Right cardiac atrium (tissue), 5 donors: ENCODE measurements at regions of chr9 and their contacts with region 1.

Region 1: GRCh38 chr9:83979812-83980394 is at the start of gene HNRNPK:
- DNase-seq: peak; percentile 99 to 100 (median 100)
- ATAC-seq: peak; percentile 95
- H3K4me3 ChIP-seq: peak within 1 kb of the TSS; percentile 73
- H3K27ac ChIP-seq: peak within 1 kb of the TSS; percentile 96
- H3K4me1 ChIP-seq: no peaks in the 10 kb centered on the region
- H3K27me3 ChIP-seq: no peaks in the 10 kb centered on the region
- total RNA-seq, gene HNRNPK: 304 to 327 (median 310) TPM

Region 2: DNA sequence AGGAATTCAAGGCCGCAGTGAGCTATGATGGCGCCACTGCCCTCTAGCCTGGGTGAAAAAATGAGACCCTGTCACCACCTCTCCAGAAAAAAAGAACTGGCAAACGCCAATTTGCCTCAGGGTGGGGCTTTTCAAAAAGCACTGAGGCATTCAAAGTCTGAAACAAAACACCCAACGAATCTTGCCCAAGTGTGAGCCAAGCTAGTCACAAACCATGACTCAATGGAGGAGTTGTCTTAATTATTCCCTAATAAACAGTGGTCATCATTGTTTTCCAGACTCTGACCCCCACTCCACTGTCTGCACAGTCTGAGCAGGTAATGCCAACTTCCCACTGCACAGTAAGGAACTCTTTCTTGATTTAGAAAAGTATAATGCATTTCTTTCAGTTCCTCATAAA is 458.5 kb before region 1 on chr9:
- intact Hi-C with region 1: no loop called
- DNase-seq: no peak
- ATAC-seq: no peak
- H3K4me3 ChIP-seq: no peak overlapping the region
- H3K27ac ChIP-seq: no peak overlapping the region
- H3K4me1 ChIP-seq: no peaks in the 10 kb centered on the region
- H3K27me3 ChIP-seq: no peaks in the 10 kb centered on the region

Region 3: DNA sequence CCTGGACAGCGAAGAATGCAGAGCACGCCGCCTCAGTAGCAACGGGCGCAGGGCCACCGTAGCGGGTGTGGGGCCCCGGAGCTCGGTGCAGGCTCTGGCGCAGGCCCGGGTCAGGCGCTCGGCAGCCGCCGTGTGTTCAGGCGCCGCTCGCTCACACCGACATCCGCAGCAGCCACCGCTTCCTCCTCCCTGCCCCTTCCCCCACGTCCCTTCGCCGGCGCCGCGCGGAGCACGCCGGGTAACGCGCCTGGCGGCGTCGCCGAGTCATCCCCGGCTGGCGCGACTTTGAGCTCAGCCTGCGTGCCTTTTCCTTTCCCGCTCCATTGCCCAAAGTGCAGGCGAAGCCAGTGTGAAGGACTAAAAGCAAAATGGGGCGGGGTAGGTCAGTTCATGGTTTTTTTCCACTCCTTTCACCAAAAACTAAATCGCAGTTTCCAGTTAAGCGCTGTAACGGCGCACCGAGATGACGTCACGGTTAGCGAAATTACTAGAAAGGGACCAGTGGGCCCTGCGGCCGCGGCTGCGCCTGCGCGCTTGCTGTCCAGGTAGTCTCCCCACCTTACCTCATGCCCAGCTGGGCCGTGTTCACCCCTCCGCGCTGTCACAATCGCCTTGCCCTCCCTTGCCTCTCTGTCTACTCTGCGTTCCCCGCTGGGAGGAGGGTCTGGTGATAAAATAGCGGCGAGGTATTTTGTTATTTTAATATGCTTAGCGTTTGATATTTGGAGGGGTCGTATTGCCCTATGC is 272.0 kb before region 1 on chr9 and contains the start of gene UBQLN1:
- intact Hi-C with region 1: loop called in 1 of 4 experiments (anchors 5 kb)
- DNase-seq: peak; percentile 96 to 98 (median 96)
- ATAC-seq: peak; percentile 98
- H3K4me3 ChIP-seq: peak within 1 kb of the TSS; percentile 65
- H3K27ac ChIP-seq: peak within 1 kb of the TSS; percentile 95
- H3K4me1 ChIP-seq: no peaks in the 10 kb centered on the region
- H3K27me3 ChIP-seq: no peaks in the 10 kb centered on the region
- total RNA-seq, gene UBQLN1: 81.3 to 88.8 (median 87.1) TPM

Region 4: DNA sequence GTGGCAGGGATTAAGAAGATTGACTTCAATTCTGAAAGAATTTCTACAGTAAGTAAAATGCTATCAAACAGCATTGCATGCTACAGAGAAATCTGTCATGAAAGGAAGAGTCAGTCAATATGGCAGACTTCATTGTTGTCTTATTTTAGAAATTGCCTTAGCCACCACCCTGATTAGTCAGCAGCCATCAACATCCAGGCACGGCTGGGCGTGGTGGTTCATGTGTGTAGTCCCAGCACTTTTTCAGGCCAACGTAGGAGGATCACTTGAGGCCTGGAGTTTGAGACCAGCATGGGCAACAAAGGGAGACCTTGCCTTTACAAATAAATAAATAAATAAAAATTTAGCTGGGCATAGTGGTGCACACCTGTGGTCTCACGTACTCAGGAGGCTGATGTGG is 47.3 kb after region 1 on chr9:
- intact Hi-C with region 1: no loop called
- DNase-seq: no peak
- ATAC-seq: no peak
- H3K4me3 ChIP-seq: no peak overlapping the region
- H3K27ac ChIP-seq: no peak overlapping the region
- H3K4me1 ChIP-seq: no peaks in the 10 kb centered on the region
- H3K27me3 ChIP-seq: no peaks in the 10 kb centered on the region

Region 5: GRCh38 chr9:84170521-84171141 is 190.7 kb after region 1 on chr9:
- intact Hi-C with region 1: loop called in 1 of 4 experiments (anchors 10 kb)
- DNase-seq: peak; percentile 88 to 91 (median 90)
- ATAC-seq: peak; percentile 96 to 97
- H3K4me3 ChIP-seq: no peak overlapping the region
- H3K27ac ChIP-seq: peak overlapping the region; percentile 49
- H3K4me1 ChIP-seq: no peaks in the 10 kb centered on the region
- H3K27me3 ChIP-seq: no peaks in the 10 kb centered on the region

Region 6: GRCh38 chr9:84207491-84207951 is 227.6 kb after region 1 on chr9:
- intact Hi-C with region 1: no loop called
- DNase-seq: no peak
- ATAC-seq: no peak
- H3K4me3 ChIP-seq: no peak overlapping the region
- H3K27ac ChIP-seq: no peak overlapping the region
- H3K4me1 ChIP-seq: no peaks in the 10 kb centered on the region
- H3K27me3 ChIP-seq: no peaks in the 10 kb centered on the region